Calu3 (cell line): ENCODE measurements at regions of chr2 and their contacts with region 1.

Region 1: DNA sequence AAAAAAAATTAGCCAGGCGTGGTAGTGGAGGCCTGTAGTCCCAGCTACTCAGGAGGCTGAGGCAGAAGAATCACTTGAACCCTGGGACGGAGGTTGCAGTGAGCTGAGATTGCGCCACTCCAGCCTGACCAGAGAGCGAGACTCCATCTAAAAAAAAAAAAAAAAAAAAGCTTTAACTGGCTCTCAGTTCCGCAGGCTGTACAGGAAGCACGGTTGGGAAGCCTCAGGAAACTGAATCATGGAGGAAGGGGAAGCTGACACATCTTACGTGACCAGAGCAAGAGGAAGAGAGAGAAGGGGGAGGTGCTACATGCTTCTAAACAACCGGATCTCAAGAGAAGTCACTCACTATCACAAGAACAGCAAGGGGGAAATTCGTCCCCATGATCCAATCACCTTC is 505.6 kb upstream of the SLC8A1 start:
- DNase-seq: no peak
- H3K4me3 Mint-ChIP-seq: no peak overlapping the region
- H3K27ac Mint-ChIP-seq: no peak overlapping the region
- H3K4me1 Mint-ChIP-seq: no peaks in the 10 kb centered on the region
- H3K27me3 Mint-ChIP-seq: no peaks in the 10 kb centered on the region
- CTCF ChIP-seq: no peak

Region 2: GRCh38 chr2:41283079-41283775 is 325.7 kb after region 1 on chr2:
- CTCF ChIA-PET with region 1: no interaction called
- intact Hi-C with region 1: loop called (anchors 1 kb)
- DNase-seq: no peak
- H3K4me3 Mint-ChIP-seq: no peak overlapping the region
- H3K27ac Mint-ChIP-seq: no peak overlapping the region
- H3K4me1 Mint-ChIP-seq: no peaks in the 10 kb centered on the region
- H3K27me3 Mint-ChIP-seq: no peaks in the 10 kb centered on the region
- CTCF ChIP-seq: no peak

Region 3: GRCh38 chr2:41400088-41400665 is 442.7 kb after region 1 on chr2:
- CTCF ChIA-PET with region 1: interaction called, 13 read pairs
- intact Hi-C with region 1: loop called (anchors 1 kb)
- DNase-seq: peak; percentile 41
- H3K4me3 Mint-ChIP-seq: no peak overlapping the region
- H3K27ac Mint-ChIP-seq: no peak overlapping the region
- H3K4me1 Mint-ChIP-seq: no peaks in the 10 kb centered on the region
- H3K27me3 Mint-ChIP-seq: no peaks in the 10 kb centered on the region
- CTCF ChIP-seq: peak; percentile 28

Region 4: DNA sequence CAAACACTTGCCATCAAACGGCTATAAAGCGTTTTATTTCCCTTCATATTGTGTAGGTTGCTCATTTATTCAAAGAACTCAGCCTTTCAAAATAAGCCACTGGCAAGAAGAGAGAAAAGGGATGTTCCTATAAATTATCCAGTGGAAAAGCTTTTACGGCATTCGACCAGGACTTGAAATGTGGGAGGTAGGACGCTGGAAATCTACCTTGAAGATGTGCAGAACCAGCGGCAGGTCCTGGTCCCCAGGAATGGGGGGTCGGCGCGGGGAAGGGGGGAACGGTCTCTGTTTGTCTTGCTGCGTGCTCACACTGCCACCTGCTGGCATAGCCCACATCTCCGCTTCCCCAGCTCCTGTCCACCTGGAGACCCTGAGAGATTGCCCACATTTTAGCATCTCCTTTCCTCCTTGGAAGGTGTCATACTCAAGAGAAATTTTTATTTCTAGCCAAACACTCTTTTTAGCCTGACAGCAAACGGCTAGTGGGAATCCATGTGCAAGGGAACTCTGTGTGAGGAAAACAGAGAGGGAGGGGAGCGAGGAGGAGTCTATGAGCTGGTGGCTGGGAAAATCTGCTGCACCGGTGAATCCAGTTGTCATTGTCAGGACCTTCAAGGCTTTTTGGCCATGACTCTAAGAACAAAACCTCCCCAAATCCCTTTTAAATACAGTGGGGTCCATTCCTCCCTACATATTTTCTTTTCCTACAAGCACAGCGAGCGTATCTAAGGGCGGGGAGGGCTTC is 741.3 kb after region 1 on chr2:
- CTCF ChIA-PET with region 1: no interaction called
- intact Hi-C with region 1: loop called (anchors 10 kb)
- DNase-seq: peak; percentile 39
- H3K4me3 Mint-ChIP-seq: no peak overlapping the region
- H3K27ac Mint-ChIP-seq: no peak overlapping the region
- H3K4me1 Mint-ChIP-seq: no peaks in the 10 kb centered on the region
- H3K27me3 Mint-ChIP-seq: peaks cover 21% of the 10 kb centered on the region
- CTCF ChIP-seq: peak; percentile 69

Region 5: GRCh38 chr2:41782306-41783158 is 825.0 kb after region 1 on chr2:
- CTCF ChIA-PET with region 1: no interaction called
- intact Hi-C with region 1: loop called (anchors 2 kb)
- DNase-seq: peak; percentile 46
- H3K4me3 Mint-ChIP-seq: no peak overlapping the region
- H3K27ac Mint-ChIP-seq: no peak overlapping the region
- H3K4me1 Mint-ChIP-seq: peaks cover 8% of the 10 kb centered on the region
- H3K27me3 Mint-ChIP-seq: peaks cover 30% of the 10 kb centered on the region
- CTCF ChIP-seq: peak; percentile 46